MCF 10A (cell line): ENCODE measurements at regions of chr20 and their contacts with region 1.

Region 1: DNA sequence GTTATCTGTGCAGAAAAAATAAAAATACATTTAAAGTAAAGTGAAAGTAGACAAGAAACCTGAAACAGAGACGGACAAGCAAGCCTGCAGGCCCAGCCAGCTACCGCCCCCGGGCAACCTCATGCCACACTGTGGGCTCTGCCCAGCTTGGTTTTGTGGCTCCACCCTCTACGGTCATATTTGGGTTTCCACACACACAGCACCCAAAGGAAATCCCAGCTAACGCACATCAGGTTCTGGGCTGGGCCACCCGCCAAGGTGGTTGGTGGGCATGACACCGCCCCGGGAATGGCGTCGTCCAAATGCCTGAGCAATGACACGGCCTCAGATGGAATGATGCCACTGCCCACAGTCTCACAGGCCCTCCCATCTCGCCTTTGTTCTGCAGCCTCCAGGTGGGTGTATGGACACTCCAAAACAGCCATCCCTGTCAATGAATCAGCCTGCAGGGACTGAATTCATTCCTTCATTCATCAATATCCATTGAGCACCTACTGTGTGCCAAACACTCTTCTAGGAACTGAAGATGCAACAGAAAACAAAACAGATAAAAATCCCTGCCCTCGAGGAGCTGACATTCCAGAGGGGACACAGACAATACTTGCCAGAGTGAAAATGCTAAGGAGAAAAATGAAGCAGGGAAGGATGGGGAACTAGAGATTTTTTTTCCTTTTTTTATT is 23.0 kb downstream of the FAM110A start:
- DNase-seq: peak; percentile 99
- H3K4me3 Mint-ChIP-seq: peak overlapping the region; percentile 61
- H3K27ac Mint-ChIP-seq: peak overlapping the region; percentile 84
- H3K4me1 Mint-ChIP-seq: peaks cover 59% of the 10 kb centered on the region
- H3K27me3 Mint-ChIP-seq: no peaks in the 10 kb centered on the region
- CTCF ChIP-seq: no peak

Region 2: GRCh38 chr20:833450-834150 is 22.9 kb before region 1 on chr20 and contains the start of gene FAM110A:
- CTCF ChIA-PET with region 1: interaction called, 5 read pairs
- POLR2A ChIA-PET with region 1: interaction called, 92 read pairs
- intact Hi-C with region 1: no loop called
- DNase-seq: peak; percentile 95
- H3K4me3 Mint-ChIP-seq: peak within 1 kb of the TSS; percentile 88
- H3K27ac Mint-ChIP-seq: peak within 1 kb of the TSS; percentile 79
- H3K4me1 Mint-ChIP-seq: peaks cover 23% of the 10 kb centered on the region
- H3K27me3 Mint-ChIP-seq: no peaks in the 10 kb centered on the region
- CTCF ChIP-seq: no peak
- total RNA-seq, gene FAM110A: 9.2 and 13.6 TPM in 2 replicates

Region 3: DNA sequence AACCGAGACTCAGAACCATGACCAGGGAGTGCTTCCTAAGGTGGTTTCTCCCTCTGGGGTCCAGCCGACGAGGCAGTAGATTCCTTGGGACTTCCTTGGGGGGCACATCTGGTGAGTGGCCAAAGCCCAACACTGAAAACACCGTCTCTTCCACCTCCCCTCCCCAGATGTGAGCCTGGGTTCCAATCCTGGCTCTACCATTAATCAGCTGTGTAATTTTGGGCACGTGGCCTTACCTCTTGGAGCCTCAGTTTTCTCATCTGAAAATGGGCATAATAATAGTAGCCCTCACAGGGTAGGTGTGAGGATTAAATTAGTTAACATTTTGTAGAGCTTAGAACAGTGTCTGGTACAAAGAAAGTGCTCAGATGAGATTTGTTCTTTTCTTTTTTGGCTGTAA is 17.5 kb before region 1 on chr20:
- CTCF ChIA-PET with region 1: interaction called, 5 read pairs
- POLR2A ChIA-PET with region 1: interaction called, 124 read pairs
- intact Hi-C with region 1: no loop called
- DNase-seq: no peak
- H3K4me3 Mint-ChIP-seq: no peak overlapping the region
- H3K27ac Mint-ChIP-seq: no peak overlapping the region
- H3K4me1 Mint-ChIP-seq: peaks cover 29% of the 10 kb centered on the region
- H3K27me3 Mint-ChIP-seq: no peaks in the 10 kb centered on the region
- CTCF ChIP-seq: no peak

Region 4: GRCh38 chr20:844473-845225 is 11.9 kb before region 1 on chr20:
- CTCF ChIA-PET with region 1: interaction called, 5 read pairs
- POLR2A ChIA-PET with region 1: interaction called, 124 read pairs
- intact Hi-C with region 1: no loop called
- DNase-seq: peak; percentile 90
- H3K4me3 Mint-ChIP-seq: peak overlapping the region; percentile 59
- H3K27ac Mint-ChIP-seq: peak overlapping the region; percentile 23
- H3K4me1 Mint-ChIP-seq: peaks cover 15% of the 10 kb centered on the region
- H3K27me3 Mint-ChIP-seq: no peaks in the 10 kb centered on the region
- CTCF ChIP-seq: no peak

Region 5: DNA sequence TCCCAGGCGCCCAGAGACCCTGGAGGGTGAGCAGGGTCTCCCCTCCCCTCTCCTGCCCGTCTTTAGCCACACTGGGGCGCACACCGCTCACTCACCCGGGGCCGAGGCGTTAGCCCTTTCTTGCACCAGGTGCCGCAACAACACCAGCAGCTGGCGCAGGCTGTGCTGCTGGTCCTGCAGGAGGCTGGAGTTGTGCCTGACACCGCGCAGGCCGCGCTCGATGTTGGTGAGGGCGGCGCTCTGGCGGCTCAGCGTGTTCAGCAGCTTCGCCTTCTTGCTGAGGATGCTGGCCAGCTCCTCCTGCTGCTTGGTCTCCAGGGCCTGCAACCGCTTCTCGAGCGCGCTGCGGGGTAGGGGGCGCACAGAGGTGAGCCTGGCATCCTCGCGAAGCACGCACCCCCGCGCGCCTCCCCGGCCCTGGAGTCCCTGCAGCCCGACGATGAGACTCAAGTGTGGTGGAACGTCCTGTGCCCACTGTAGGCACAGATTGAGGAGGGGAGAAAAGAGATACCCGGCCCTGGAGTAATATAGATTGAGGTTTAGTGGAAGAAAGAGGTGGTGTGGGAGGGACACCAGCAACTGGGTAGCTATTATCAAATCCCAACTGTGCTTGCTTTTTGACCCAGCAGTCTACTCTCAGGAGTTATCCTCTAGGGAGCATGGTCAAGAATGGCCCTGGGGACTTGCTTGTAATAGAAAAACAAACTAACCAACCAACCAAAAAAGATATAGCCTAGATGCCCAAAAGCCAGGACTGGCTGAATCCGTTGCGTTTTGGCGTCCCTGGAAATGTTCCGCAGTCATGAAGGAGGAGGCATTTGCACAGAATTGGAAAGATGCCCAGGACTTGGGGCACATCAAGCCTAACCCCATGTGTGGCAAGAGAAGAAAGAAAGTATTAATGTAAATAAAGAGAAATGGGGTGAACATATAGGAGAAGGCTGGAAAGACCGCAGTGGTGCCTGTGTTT is 28.8 kb after region 1 on chr20:
- CTCF ChIA-PET with region 1: interaction called, 4 read pairs
- POLR2A ChIA-PET with region 1: interaction called, 7 read pairs
- intact Hi-C with region 1: loop called (anchors 1 kb)
- DNase-seq: no peak
- H3K4me3 Mint-ChIP-seq: no peak overlapping the region
- H3K27ac Mint-ChIP-seq: no peak overlapping the region
- H3K4me1 Mint-ChIP-seq: peaks cover 37% of the 10 kb centered on the region
- H3K27me3 Mint-ChIP-seq: no peaks in the 10 kb centered on the region
- CTCF ChIP-seq: no peak